ENCODE measurements at regions of chr11 and their contacts with region 1.

Region 1: GRCh38 chr11:62081378-62082291 is 42.2 kb upstream of the INCENP start:
- H3K4me3 ChIP-seq: no peak overlapping the region
- H3K27ac ChIP-seq: no peak overlapping the region
- H3K4me1 ChIP-seq: no peaks in the 10 kb centered on the region
- CTCF ChIP-seq: peak; percentile 76

Region 2: DNA sequence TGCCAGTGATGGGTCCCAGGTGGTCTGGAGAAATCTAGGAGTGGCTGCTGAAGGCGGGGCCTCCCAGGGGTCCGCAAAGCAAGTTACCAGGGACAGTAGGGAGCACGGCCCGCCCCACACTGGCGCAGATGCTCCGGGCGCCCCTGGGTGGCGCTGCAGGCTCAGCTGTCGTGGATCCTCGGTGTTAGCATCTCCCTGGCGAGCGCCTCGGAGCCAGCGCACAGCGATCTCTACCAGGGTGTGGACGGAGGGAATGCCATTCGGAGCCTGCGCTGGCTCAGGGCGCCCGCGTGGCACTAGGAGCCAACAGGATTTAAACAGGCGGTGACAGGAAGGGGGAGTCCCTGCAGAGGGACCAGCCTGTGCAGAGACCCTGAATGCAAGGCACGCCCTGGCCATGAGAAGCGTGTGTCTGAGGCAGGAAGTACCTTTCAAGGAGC is 210.5 kb before region 1 on chr11:
- CTCF ChIA-PET with region 1: interaction called, 64 read pairs
- POLR2A ChIA-PET with region 1: interaction called, 3 read pairs
- H3K4me3 ChIP-seq: no peak overlapping the region
- H3K27ac ChIP-seq: no peak overlapping the region
- H3K4me1 ChIP-seq: no peaks in the 10 kb centered on the region
- CTCF ChIP-seq: peak; percentile 95

Region 3: DNA sequence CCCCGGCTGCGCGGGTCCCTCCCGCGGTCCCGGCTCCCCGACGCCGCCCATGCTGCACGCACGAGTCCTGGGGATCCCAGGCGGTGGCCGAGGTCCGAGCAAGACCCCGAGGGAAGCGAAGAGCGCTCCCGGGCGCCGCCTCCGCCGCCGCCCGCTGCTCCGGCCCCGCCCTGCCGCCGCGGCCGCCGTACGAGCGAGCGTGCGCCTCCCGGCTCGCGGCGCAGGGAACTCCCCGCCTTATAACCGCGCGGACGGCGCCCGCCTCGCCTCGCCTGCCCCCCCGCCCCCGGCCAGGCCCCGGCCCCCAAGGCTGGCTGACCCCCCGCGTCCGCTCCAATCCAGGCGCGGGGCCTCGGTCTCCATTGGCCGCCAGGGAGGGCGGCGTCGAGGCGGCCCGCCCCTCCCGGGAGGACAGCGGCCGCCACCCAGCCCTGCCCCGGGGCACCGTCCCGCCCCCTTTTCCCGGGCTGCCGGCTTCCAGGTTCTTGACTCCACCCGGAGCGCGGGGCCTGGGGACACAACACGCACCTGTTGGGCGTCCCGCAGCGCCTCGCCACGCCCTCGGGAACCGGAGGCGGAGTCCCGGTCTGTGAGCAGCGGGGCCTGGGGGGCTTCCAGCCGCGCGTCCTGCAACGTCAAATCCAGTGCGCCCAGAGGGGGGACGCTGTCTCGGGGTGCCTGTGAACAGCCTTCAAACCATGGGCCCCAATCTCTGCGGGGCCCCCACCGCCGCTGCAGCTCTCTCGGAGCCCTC is 190.1 kb before region 1 on chr11 and contains the start of gene FADS3:
- CTCF ChIA-PET with region 1: interaction called, 258 read pairs
- POLR2A ChIA-PET with region 1: no interaction called
- H3K4me3 ChIP-seq: peak within 1 kb of the TSS; percentile 40
- H3K27ac ChIP-seq: peak within 1 kb of the TSS; percentile 57; the same call in 1 of the 2 replicates
- H3K4me1 ChIP-seq: peaks cover 3% of the 10 kb centered on the region
- CTCF ChIP-seq: 0 out of 2 replicates have a peak, but pooled peaks have one; percentile 34

Region 4: GRCh38 chr11:61967116-61967923 is 114.3 kb before region 1 on chr11 and contains the start of gene FTH1:
- CTCF ChIA-PET with region 1: interaction called, 12 read pairs
- POLR2A ChIA-PET with region 1: interaction called, 5 read pairs
- H3K4me3 ChIP-seq: peak within 1 kb of the TSS; percentile 82
- H3K27ac ChIP-seq: peak within 1 kb of the TSS; percentile 85
- H3K4me1 ChIP-seq: 0 out of 2 replicates have a peak, but pooled peaks cover 3% of the 10 kb centered on the region
- CTCF ChIP-seq: no peak

Region 5: GRCh38 chr11:62054484-62055121 is 27.0 kb before region 1 on chr11:
- CTCF ChIA-PET with region 1: interaction called, 19 read pairs
- POLR2A ChIA-PET with region 1: no interaction called
- H3K4me3 ChIP-seq: no peak overlapping the region
- H3K27ac ChIP-seq: no peak overlapping the region
- H3K4me1 ChIP-seq: no peaks in the 10 kb centered on the region
- CTCF ChIP-seq: peak; percentile 64

Region 6: GRCh38 chr11:62069986-62070919 is 11.4 kb before region 1 on chr11:
- CTCF ChIA-PET with region 1: interaction called, 28 read pairs
- POLR2A ChIA-PET with region 1: no interaction called
- H3K4me3 ChIP-seq: no peak overlapping the region
- H3K27ac ChIP-seq: no peak overlapping the region
- H3K4me1 ChIP-seq: no peaks in the 10 kb centered on the region
- CTCF ChIP-seq: no peak